Psoas muscle (tissue), 8 donors: ENCODE measurements at regions of chr3 and their contacts with region 1.

Region 1: DNA sequence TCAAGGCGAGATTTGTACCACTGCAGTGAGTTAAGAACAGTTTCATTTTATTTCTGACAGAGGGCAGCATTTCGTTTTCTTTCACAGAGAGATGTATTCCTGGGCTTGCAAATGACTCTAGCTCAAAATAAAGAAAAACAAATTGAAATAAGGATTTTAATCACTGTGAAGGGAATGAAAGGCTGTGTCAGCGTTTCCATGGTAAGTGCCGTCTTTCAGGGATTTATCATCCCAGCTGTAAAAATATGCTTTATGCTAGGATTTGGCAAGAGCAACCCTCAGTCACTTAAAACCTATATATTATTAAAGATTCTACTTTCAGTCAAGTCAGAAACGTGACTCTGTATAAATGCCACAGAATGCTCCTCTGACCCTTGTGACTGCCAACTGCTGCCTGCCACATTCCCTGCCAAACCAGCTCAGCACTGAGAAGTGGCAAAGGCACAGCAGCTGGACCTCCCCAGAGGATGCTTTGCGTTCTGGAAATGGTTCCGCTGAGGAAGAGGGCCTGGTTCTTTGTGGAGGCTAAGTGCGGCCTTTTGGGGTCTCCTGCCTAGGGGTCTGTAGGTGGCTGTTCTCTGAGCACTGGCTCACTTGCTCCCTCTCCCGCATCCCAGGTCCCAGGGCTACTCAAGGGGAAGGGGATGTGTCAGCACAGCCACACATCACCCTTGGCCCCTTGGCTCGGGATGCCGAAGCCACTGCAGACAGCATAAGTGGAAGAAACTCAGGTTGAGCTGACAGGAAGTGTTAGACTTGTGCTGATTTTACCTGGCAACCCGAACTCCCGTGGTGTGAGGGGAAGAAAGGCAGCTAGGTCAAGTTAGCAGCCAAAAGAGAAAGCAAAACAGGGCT is 56.6 kb upstream of the POMGNT2 start:
- DNase-seq: no peak
- ATAC-seq: peak in 1 of 4 donors; percentile 70
- H3K4me3 ChIP-seq: no peak overlapping the region
- H3K27ac ChIP-seq: no peak overlapping the region
- H3K4me1 ChIP-seq: peaks cover 9% of the 10 kb centered on the region
- H3K27me3 ChIP-seq: peaks cover 0 to 2% (median 0%) of the 10 kb centered on the region in 3 donors
- CTCF ChIP-seq: peak; percentile 37

Region 2: GRCh38 chr3:43231276-43232000 is 69.0 kb after region 1 on chr3:
- intact Hi-C with region 1: no loop called
- DNase-seq: no peak
- ATAC-seq: no peak
- H3K4me3 ChIP-seq: no peak overlapping the region
- H3K27ac ChIP-seq: no peak overlapping the region
- H3K4me1 ChIP-seq: no peaks in the 10 kb centered on the region
- H3K27me3 ChIP-seq: no peaks in the 10 kb centered on the region
- CTCF ChIP-seq: no peak

Region 3: DNA sequence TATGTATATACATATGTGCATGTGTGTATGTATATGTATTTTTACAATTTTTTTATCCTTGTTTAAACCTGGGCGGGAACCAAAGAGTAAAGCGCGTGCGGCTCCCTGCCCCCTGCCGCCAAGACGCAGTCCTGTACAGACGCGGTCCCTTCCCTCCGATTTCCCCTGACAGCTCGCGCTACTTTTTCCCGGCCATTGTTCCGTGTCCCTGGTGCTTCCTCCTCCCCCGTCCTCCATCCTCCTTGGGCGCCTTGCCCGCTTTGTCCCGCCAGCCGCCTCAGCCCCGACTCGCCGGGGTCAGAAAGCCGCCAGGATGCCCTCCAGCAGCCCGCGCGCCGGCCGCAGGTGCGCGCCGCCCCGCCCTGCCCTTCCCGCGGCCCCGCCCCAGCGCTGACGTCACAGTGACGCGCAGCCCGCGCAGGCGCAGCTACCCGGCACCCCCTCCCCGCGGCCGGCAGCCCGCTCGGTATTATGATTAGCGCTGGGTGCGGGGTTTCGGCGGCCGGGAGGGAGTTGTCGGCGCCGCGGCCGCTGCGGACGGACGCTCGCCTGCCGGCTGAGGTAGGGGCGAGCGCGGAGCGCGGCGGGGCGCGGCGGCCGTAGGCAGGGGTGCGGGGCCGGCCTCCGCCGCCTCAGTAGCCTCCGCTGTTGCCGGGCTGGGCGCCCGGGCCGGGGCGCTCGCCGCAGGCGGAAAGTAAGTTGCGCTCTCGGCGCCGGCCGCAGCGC is 123.8 kb after region 1 on chr3 and contains the start of gene SNRK:
- intact Hi-C with region 1: loop called in 1 of 2 experiments (anchors 5 kb)
- DNase-seq: peak; percentile 86 to 94
- ATAC-seq: peak; percentile 97 to 99 (median 98)
- H3K4me3 ChIP-seq: peak within 1 kb of the TSS; percentile 80
- H3K27ac ChIP-seq: peak within 1 kb of the TSS; percentile 92
- H3K4me1 ChIP-seq: peaks cover 45% of the 10 kb centered on the region
- H3K27me3 ChIP-seq: no peaks in the 10 kb centered on the region
- CTCF ChIP-seq: peak; percentile 24
- total RNA-seq, gene SNRK: 18.8 to 25.6 (median 21.5) TPM

Region 4: GRCh38 chr3:43378066-43378935 is 215.8 kb after region 1 on chr3:
- intact Hi-C with region 1: loop called in 1 of 2 experiments (anchors 10 kb)
- DNase-seq: peak in 1 of 2 donors; percentile 45
- ATAC-seq: peak in 3 of 4 donors; percentile 76 to 86 (median 77)
- H3K4me3 ChIP-seq: no peak overlapping the region
- H3K27ac ChIP-seq: peak overlapping the region; percentile 24
- H3K4me1 ChIP-seq: no peaks in the 10 kb centered on the region
- H3K27me3 ChIP-seq: no peaks in the 10 kb centered on the region
- CTCF ChIP-seq: peak; percentile 56

Region 5: DNA sequence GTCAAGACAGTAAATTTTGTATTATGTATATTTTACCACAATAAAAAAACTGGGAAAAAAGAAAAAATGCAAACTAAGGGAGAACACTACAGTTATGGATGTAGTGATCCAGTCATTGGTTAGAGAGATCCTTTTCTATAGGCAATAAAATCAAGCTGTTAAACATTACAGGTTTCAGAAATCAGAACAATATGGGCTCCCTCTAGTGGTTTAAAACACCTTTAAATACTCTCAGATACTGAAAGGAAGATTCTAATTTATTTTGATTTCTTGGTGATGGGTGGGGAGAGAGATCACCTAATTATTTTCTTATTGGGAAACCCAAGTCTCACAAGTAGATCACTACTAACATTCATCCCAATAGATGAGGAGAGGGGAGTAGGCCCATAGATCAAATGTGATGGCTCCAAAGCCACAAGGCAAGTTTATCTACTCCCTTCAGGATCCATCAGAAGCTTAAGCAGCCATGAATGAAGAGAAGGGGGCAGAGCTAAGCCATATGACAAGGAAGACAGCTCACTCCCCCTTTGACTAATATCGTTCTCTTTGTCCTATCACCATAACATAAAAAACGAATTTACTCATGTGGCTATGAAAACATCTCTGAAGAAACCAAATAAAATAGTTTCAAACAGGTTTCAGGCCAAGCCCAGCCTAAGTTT is 340.7 kb after region 1 on chr3:
- intact Hi-C with region 1: loop called (anchors 1 to 5 kb)
- DNase-seq: no peak
- ATAC-seq: peak in 1 of 4 donors; percentile 74
- H3K4me3 ChIP-seq: no peak overlapping the region
- H3K27ac ChIP-seq: no peak overlapping the region
- H3K4me1 ChIP-seq: no peaks in the 10 kb centered on the region
- H3K27me3 ChIP-seq: no peaks in the 10 kb centered on the region
- CTCF ChIP-seq: peak; percentile 56